ENCODE measurements at regions of chr4 and their contacts with region 1.

Region 1: GRCh38 chr4:48526406-48526805 is 36.4 kb downstream of the ZAR1 start:
- DNase-seq: no peak
- H3K27ac ChIP-seq: no peak overlapping the region
- CTCF ChIP-seq: no peak

Region 2: DNA sequence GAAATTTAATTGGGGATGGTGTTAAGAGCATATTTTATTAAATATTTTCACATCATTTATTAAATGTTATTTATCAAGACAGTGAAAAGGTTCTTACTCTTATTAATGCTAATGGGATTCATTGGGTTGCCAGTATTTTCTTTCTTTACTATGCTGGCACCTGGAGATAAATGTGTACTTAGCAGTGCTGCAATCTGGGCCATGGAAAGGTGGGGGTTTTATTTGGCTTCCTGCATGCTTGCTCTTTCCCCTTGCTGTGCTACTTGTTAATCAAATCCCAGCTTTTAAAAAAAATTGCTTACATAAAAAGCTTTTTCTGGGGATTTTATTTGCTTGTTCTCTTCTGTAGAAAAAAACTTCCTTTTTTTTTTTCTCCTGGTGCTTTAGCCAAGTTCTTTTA is 12.0 kb after region 1 on chr4:
- CTCF ChIA-PET with region 1: interaction called, 11 read pairs
- POLR2A ChIA-PET with region 1: no interaction called
- DNase-seq: no peak
- H3K27ac ChIP-seq: no peak overlapping the region
- CTCF ChIP-seq: no peak